Activated CD4-positive, alpha-beta T cell treated with anti-CD3 and anti-CD28 coated beads for 36 hours (primary cell): ENCODE measurements at regions of chrX and their contacts with region 1.

Region 1: GRCh38 chrX:56764153-56764974 is 35.3 kb downstream of the NBDY start:
- DNase-seq: peak; percentile 78
- ATAC-seq: peak; percentile 68
- H3K4me3 Mint-ChIP-seq: peak overlapping the region; percentile 67
- H3K27ac Mint-ChIP-seq: peak overlapping the region; percentile 99
- H3K4me1 Mint-ChIP-seq: peaks cover 51% of the 10 kb centered on the region
- H3K27me3 Mint-ChIP-seq: no peaks in the 10 kb centered on the region

Region 2: DNA sequence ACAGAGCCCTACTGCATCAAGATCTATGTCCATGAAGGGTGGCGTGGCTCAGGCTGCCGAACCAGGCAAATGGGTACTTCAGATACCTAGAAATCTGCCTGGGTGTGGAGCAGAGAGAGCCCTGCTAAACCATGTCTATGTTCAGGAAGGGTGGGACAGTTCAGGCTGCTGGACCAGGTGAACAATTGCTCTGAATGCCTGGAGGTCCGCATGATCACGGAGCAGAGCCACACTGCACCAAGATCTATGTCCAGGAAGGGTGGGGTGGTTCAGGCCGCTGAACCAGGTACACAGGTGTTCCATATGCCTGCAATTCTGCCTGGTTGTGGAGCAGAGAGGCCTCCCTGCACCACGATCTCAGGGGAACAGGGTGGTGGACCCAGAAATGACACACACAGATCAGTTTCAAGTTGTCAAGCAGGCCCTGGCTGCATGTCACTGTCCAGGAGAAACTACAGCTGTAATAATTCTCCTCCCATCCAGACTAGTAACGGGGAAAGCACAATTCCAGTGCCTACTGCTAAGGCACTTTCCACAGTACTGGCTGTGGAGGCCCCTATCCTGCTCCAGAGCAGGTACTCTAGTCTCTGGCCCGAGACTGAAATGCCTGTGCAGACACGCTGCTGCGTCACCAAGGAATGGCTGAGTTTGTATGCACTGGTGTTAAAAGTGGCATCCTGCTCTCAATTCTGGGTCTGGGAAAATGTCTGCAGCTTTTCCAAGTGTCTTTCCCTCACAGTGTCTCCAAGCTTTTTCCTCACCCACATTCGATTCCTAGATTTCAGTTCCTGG is 175.8 kb before region 1 on chrX:
- CTCF ChIA-PET with region 1: no interaction called
- POLR2A ChIA-PET with region 1: no interaction called
- intact Hi-C with region 1: no loop called
- DNase-seq: no peak
- ATAC-seq: no peak
- H3K4me3 Mint-ChIP-seq: no peak overlapping the region
- H3K27ac Mint-ChIP-seq: no peak overlapping the region
- H3K4me1 Mint-ChIP-seq: peaks cover 2% of the 10 kb centered on the region
- H3K27me3 Mint-ChIP-seq: no peaks in the 10 kb centered on the region

Region 3: DNA sequence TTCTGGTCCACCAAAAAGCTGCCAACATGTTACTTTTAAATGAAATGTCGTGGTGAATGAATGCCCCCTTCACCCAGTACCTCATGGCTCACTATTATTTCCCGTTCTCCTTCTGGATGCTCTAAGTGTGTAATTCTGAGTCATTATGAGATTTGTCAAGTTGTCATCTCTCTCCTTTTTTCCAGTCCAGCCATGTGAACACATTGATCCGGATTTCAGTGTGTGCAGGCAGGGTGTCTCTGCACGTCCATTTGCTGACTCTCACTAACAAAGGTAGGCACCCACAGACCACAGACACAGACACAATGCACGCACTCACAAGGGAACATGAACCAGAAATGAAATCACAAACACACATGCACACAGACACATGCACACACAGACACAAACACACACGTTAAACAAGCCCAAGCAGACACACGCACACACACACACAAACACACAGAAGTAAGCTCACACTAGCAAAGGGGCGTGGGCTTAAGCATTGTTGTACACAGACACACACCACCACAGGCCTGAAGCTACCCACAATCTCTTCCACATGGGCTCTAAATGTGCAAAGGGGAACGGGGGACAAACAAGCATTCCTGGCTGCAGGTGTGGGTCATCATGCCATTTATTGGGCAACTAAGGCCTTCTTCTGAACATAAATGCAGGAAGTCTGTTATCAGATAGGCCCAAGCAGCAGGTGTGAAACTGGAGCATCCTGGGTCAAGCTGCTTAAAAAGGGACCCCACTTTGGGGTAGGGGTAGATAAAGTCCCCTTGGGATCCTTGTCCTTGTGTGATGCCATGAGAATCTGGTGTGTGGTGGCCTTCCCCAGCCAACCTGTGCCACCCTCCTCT is 22.7 kb after region 1 on chrX:
- CTCF ChIA-PET with region 1: interaction called, 8 read pairs
- POLR2A ChIA-PET with region 1: no interaction called
- intact Hi-C with region 1: loop called in 1 of 2 experiments (anchors 1 kb)
- DNase-seq: peak; percentile 35
- ATAC-seq: peak; percentile 60
- H3K4me3 Mint-ChIP-seq: no peak overlapping the region
- H3K27ac Mint-ChIP-seq: peak overlapping the region; percentile 89
- H3K4me1 Mint-ChIP-seq: peaks cover 48% of the 10 kb centered on the region
- H3K27me3 Mint-ChIP-seq: no peaks in the 10 kb centered on the region